Mammary epithelial cell (primary cell): ENCODE measurements at regions of chr9 and their contacts with region 1.

Region 1: DNA sequence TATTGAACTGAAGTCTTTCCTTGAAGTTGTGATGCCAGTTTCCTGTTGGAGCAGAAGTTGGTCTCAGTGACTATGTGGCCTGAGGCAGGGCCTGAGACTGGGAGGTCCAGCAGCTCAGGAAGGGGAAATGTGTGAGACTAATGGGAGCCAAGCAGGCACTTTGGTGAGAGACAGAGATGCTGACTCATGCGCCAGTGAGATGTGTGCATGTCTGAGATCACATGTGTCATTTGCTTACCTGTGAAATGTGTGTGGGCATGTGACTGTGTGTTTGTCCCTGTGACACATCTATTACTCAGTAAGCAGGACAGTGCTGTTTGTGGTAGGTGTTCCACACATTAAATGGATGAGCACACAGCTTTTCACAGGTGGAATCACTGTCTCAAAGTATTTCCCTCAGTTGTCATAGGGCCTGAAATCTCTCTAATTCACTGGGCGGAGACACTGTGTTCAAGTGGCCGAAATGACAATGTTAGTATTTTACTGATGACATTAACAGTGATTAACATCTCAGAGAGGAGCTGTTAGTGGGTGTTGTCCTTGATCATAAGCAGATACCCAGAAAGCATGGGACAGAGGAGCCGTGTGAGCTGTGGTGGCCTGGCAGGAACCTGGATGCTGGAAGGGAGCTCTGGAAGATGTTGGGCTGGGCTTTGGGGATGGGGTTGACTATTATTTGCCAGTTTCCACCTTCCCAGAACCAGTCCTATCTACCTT is 7.4 kb downstream of the NPR2 start:
- DNase-seq: peak; percentile 95
- H3K4me3 ChIP-seq: no peak overlapping the region
- H3K27ac ChIP-seq: peak overlapping the region; percentile 31
- H3K4me1 ChIP-seq: peaks cover 23% of the 10 kb centered on the region
- H3K27me3 ChIP-seq: no peaks in the 10 kb centered on the region
- CTCF ChIP-seq: no peak

Region 2: DNA sequence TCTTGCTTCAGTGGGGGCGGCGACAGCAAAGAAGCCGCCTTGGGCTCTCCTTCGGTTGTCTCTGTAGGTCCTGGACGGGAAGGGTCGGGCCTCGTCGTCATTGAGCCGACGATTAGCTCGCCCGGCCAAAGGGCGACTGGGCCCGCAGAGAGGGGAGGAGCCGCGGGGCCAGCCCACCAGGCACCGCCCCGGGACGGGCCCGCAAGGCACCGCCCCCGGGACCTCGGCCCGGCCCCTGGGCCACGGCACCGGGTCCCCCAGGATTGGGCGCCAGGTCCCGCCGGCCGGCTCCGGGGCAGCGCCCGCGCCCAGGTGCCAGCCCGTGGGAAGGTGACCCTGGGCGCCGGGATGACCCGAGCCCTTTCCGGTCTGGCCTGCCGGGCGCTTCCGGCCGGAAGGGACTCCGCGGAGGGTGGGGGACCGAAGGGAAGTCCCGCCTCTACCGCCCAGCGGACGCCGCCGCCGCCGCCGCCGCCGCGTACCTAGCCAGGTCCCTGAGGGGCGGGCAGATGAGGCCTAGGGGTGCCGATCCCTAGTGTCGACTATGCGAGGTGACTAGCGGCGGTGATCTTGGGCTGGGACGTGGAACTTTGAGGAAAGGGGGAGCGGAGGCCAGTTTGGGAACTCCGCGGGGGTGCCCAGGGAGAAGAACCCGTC is 49.8 kb before region 1 on chr9 and contains the starts of genes GBA2 and RGP1:
- CTCF ChIA-PET with region 1: no interaction called
- dilution Hi-C with region 1: no loop called
- in situ Hi-C with region 1: no loop called
- intact Hi-C with region 1: loop called (anchors 2 kb)
- DNase-seq: peak; percentile 79
- H3K4me3 ChIP-seq: peak within 1 kb of the TSS; percentile 66 to 83 (median 71)
- H3K27ac ChIP-seq: peak within 1 kb of the TSS; percentile 50
- H3K4me1 ChIP-seq: peaks cover 24% of the 10 kb centered on the region
- H3K27me3 ChIP-seq: no peaks in the 10 kb centered on the region
- CTCF ChIP-seq: no peak
- total RNA-seq, gene GBA2: 41.0 to 49.8 TPM
- total RNA-seq, gene RGP1: 20.5 to 42.3 TPM